OCI-LY7 (cell line): ENCODE measurements at regions of chr2 and their contacts with region 1.

Region 1: GRCh38 chr2:32946314-32947075 is at the start of gene LTBP1:
- DNase-seq: peak; percentile 93
- H3K4me3 ChIP-seq: peak within 1 kb of the TSS; percentile 71
- H3K27ac ChIP-seq: peak within 1 kb of the TSS; percentile 78
- H3K4me1 ChIP-seq: peaks cover 61% of the 10 kb centered on the region
- CTCF ChIP-seq: peak; percentile 97
- total RNA-seq, gene LTBP1: 59.8 and 61.1 TPM in 2 replicates

Region 2: DNA sequence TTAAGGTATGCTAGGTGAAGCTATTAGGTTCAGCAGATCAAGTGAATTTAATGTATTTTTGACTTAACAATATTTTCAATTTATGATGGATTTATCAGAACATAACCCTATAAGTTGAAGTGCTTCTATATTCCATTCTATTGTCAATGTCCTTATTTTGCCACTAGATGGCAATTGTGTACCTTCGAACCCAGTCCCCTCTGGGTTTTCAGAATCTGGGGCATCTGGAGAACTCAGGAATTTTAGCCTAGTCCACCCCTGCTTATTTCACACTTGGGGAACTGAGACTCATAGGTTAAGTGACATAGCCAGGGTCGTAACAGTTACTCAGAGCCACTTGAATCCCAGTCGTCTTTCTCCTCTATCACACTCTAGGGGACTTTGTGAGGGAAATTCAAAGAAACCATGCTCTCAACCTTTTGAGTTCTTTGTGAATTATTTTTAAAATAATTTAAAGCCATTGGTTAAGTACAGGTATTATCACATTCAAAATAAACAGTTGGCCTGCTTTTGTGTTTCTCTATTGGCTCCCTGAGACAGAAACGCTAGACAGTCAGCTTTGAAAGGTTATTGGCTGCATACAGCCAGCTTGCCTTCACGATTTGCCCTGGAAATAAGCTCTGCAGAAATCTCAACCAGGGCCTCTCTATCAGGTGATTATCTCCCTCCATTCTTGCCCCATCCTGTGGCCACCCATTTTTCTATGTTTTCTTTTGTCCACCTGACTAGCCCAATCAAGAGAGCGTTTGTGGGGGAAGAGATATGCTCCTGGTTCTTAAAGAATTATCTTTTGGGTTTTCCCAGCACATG is 173.7 kb before region 1 on chr2:
- CTCF ChIA-PET with region 1: interaction called, 5 read pairs
- POLR2A ChIA-PET with region 1: no interaction called
- intact Hi-C with region 1: loop called (anchors 1 kb)
- DNase-seq: peak; percentile 71
- H3K4me3 ChIP-seq: no peak overlapping the region
- H3K27ac ChIP-seq: peak overlapping the region; percentile 20
- H3K4me1 ChIP-seq: peaks cover 14% of the 10 kb centered on the region
- CTCF ChIP-seq: peak; percentile 99

Region 3: DNA sequence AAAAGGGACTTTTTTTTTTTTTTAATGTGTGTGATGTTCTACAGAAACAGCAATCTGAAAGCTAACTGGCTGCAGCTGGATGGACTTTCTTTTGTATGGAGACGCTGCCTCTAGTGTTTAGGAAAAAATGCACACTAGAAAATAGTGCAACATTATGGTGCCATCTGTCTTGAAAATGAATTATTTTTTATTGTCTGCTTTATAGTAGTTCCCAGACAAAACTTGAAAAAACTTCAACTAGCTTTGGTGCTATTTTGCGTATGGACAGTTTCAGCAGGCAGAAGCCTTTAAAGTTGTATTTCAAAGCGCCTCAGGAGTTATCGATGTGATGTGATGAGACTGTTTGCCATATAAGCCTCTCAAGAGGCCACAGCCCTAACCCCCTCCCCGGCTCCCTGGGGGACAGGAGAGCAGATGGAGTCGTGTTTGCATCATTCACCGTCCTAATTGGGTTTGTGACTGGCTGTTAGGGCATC is 87.1 kb after region 1 on chr2:
- CTCF ChIA-PET with region 1: no interaction called
- POLR2A ChIA-PET with region 1: interaction called, 3 read pairs
- intact Hi-C with region 1: loop called (anchors 5 kb)
- DNase-seq: peak; percentile 69
- H3K4me3 ChIP-seq: no peak overlapping the region
- H3K27ac ChIP-seq: no peak overlapping the region
- H3K4me1 ChIP-seq: peaks cover 26% of the 10 kb centered on the region
- CTCF ChIP-seq: peak; percentile 87

Region 4: GRCh38 chr2:33086400-33087015 is 140.0 kb after region 1 on chr2:
- CTCF ChIA-PET with region 1: no interaction called
- POLR2A ChIA-PET with region 1: interaction called, 4 read pairs
- intact Hi-C with region 1: loop called (anchors 1 kb)
- DNase-seq: peak; percentile 81
- H3K4me3 ChIP-seq: peak overlapping the region; percentile 34
- H3K27ac ChIP-seq: peak overlapping the region; percentile 95
- H3K4me1 ChIP-seq: peaks cover 60% of the 10 kb centered on the region
- CTCF ChIP-seq: peak; percentile 60

Region 5: GRCh38 chr2:33372940-33373553 is 426.6 kb after region 1 on chr2:
- CTCF ChIA-PET with region 1: no interaction called
- POLR2A ChIA-PET with region 1: no interaction called
- intact Hi-C with region 1: loop called (anchors 5 kb)
- DNase-seq: peak; percentile 63
- H3K4me3 ChIP-seq: no peak overlapping the region
- H3K27ac ChIP-seq: no peak overlapping the region
- H3K4me1 ChIP-seq: no peaks in the 10 kb centered on the region
- CTCF ChIP-seq: peak; percentile 96